ENCODE measurements at regions of chr14 and their contacts with region 1.

Region 1: GRCh38 chr14:91418387-91419043 is 895 bp upstream of the CCDC88C start:
- DNase-seq: peak; percentile 71
- H3K4me3 Mint-ChIP-seq: peak overlapping the region; percentile 71
- H3K27ac Mint-ChIP-seq: no peak overlapping the region
- H3K4me1 Mint-ChIP-seq: peaks cover 24% of the 10 kb centered on the region
- H3K27me3 Mint-ChIP-seq: no peaks in the 10 kb centered on the region
- CTCF ChIP-seq: peak; percentile 97

Region 2: DNA sequence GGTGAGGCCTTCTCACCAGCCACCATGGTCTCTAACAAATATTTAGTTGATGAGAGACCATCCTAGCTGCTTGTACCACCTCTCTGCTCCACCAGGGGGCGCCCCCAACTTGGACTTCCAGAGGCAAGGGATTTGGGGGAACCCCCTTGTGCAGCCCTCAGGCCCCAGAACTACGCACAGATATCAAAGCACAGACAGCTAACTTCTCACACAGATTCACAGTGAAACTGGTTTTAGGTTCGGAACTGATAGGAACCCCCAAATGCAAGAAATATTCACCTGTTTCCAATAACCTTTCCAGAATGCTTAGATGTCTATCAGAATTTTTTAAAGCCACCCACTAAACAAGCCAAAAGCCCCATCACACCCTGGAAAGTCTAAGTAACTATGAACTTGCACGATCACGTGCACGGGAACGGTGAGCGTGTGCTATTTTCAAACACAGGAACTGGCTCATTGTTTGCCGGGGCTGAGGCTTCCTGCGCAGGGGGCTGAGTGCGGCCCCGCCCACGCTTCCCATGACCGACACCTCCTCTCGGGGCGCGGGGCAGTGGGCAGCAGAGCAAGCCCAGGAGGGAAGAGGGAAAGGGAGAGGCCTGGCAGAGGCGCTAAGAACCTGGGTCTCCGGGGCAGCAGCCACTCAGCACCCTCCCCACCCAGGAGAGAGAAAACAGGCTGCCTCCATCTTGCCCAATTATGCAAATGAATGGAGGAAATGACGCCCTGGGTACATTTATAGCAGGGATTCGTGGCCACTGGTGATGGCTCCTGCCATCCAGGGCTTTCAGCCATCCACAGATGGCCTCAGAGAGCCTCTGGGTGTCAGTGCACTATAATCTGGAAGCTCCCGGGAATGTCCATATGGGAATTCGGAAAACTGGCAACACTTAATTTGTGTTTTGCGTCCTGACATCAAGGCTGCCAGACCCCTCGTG is 94.6 kb before region 1 on chr14:
- CTCF ChIA-PET with region 1: interaction called, 276 read pairs
- POLR2A ChIA-PET with region 1: interaction called, 22 read pairs
- intact Hi-C with region 1: no loop called
- DNase-seq: peak; percentile 81
- H3K4me3 Mint-ChIP-seq: no peak overlapping the region
- H3K27ac Mint-ChIP-seq: no peak overlapping the region
- H3K4me1 Mint-ChIP-seq: peaks cover 5% of the 10 kb centered on the region
- H3K27me3 Mint-ChIP-seq: no peaks in the 10 kb centered on the region
- CTCF ChIP-seq: peak; percentile 88

Region 3: DNA sequence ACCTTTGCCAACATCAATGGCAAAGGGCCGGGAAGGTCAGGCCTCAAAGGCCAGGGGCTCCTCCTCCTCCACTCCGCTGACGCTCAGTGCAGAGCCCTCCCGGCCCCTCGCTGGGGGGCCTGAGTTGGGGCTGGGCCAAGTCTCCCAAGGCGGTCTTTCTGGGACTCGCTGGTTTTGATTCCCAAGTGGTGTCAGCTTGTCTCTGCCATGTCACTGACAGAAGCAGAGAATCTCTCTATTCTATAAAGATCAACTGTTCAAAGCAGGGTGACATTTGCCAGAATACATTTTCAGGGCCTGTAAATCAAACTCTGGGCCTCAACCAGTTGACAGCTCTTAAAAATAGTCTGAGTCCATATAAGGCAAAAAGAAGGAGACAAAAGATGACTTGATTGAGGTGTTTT is 76.8 kb before region 1 on chr14:
- CTCF ChIA-PET with region 1: interaction called, 15 read pairs
- POLR2A ChIA-PET with region 1: interaction called, 3 read pairs
- intact Hi-C with region 1: no loop called
- DNase-seq: no peak
- H3K4me3 Mint-ChIP-seq: no peak overlapping the region
- H3K27ac Mint-ChIP-seq: no peak overlapping the region
- H3K4me1 Mint-ChIP-seq: no peaks in the 10 kb centered on the region
- H3K27me3 Mint-ChIP-seq: no peaks in the 10 kb centered on the region
- CTCF ChIP-seq: no peak

Region 4: GRCh38 chr14:91363776-91364523 is 54.6 kb before region 1 on chr14:
- CTCF ChIA-PET with region 1: interaction called, 12 read pairs
- POLR2A ChIA-PET with region 1: interaction called, 99 read pairs
- intact Hi-C with region 1: loop called (anchors 2 kb)
- DNase-seq: no peak
- H3K4me3 Mint-ChIP-seq: no peak overlapping the region
- H3K27ac Mint-ChIP-seq: no peak overlapping the region
- H3K4me1 Mint-ChIP-seq: peaks cover 39% of the 10 kb centered on the region
- H3K27me3 Mint-ChIP-seq: no peaks in the 10 kb centered on the region
- CTCF ChIP-seq: no peak

Region 5: DNA sequence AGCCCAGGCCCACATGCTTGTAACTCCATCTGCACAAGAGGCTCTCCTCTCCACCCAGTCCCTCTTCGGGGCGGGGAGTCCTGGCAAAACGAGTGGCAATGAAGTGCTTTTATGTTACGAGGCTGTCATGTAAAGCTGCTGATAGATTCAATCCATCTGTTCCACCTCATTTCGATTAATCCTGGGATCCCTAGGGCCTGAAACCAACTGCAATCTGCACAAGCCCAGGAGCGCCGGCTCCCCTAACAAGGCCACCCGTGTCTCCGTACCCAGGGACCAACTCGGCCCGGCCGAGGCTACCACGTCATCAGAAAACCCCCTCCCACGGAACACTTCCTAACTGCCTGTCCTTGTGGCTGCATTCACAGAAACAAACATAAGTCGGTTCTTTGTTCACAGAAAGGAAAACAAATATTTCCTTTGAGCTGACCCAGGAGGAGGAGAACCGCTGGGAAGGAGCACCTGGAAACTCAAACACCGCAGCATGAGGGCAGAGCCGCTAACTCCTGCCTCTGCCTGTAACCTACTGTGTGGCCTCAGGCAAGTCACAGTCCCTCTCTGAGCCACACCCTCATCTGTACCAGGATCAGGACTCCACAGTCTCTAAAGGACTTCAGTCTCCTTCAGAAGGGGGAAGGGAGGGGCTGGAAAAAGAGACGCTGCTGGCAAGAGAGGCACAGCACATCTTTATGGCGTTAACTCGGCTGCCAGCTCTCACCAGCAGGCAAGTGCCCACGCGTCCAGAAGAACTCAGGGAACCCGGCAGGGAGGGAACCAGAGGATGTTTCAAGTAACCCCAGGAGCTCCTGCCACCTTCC is 48.7 kb before region 1 on chr14:
- CTCF ChIA-PET with region 1: interaction called, 10 read pairs
- POLR2A ChIA-PET with region 1: interaction called, 16 read pairs
- intact Hi-C with region 1: no loop called
- DNase-seq: peak; percentile 74
- H3K4me3 Mint-ChIP-seq: peak overlapping the region; percentile 35
- H3K27ac Mint-ChIP-seq: peak overlapping the region; percentile 81
- H3K4me1 Mint-ChIP-seq: peaks cover 41% of the 10 kb centered on the region
- H3K27me3 Mint-ChIP-seq: no peaks in the 10 kb centered on the region
- CTCF ChIP-seq: no peak

Region 6: DNA sequence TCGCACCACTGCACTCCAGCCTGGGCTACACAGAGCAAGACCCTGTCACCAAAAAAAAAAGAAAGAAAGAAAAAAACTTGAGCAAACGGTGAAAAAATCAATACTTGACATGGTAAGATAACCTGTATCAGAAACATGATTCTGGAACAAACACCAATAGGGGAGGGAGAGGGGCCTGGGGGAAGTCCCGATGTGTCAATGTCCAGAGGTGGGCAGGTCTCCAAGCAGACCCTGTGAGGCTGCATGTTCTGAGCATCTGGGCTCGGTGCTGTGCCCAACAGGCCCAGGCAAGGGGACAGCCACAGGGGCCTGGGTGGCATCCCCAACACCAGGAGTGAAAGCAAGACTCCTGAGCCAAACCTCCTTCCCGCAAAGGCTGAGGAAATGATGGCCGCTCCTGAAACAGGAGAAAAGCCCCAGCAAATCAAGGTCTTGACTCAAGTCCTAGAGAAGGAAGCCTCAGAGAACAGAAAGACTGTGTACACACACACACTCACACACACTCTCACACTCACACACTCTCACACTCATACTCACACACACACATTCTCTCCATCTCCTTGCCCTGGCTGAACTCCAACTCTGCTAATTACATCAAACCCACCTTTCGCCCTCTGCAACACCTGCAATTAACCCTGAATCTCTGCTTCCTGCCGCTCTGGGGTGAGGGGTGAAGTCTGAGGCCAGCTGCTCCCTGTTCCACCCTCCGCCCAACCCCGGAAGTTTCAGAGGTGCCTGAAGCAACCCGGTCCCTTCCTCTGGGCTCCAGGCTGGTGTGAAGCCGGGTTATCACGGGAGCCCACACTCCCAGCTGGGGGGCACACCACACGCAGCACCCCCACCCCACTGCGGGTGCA is 21.3 kb before region 1 on chr14:
- CTCF ChIA-PET with region 1: interaction called, 9 read pairs
- POLR2A ChIA-PET with region 1: interaction called, 31 read pairs
- intact Hi-C with region 1: no loop called
- DNase-seq: peak; percentile 13
- H3K4me3 Mint-ChIP-seq: peak overlapping the region; percentile 47
- H3K27ac Mint-ChIP-seq: peak overlapping the region; percentile 99
- H3K4me1 Mint-ChIP-seq: peaks cover 36% of the 10 kb centered on the region
- H3K27me3 Mint-ChIP-seq: no peaks in the 10 kb centered on the region
- CTCF ChIP-seq: no peak

Region 7: DNA sequence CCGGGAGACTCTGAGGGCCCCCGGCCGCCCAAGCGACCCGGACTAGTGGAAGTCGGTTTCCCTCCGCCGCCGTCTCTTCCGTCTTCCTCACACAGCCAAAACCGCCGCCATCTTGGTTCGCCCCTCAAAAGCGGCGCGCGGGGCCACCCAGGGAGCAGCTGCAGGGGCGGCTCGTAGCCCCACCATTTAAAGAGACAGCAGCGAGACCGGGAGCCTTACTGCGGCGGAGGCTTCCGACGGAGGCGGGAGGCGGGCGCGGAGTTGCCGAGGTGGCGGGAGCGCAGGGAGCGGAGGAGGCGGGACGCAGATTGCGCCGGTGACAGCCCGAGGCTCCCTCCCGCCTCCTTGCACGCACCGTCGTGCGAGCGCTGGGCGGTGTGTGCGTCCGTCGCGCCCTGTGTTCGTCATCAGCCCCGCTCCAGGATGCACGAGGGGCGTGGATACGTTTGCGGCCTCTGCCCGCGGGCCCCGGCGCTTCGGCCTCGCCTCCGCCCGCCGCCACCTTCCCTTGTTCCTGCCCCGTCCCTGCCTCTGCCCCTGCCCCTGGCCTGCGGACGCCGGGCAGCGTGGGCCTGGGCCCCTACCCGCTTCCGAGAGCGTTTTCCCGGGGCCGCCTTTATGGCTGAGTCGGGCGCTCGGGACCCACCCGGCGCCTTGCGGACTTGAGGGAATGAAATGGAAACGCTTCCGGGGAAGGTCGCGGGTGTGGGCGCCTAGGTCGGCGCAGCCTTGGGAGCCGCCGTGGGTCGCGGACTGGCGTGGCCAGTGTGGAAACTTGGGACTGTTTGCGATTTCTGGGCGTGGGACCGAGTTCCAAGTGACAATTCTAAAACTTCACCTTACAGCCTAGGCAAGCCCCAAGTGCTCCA is 91.9 kb after region 1 on chr14 and contains the start of gene PPP4R3A:
- CTCF ChIA-PET with region 1: no interaction called
- POLR2A ChIA-PET with region 1: interaction called, 17 read pairs
- intact Hi-C with region 1: no loop called
- DNase-seq: peak; percentile 96
- H3K4me3 Mint-ChIP-seq: peak within 1 kb of the TSS; percentile 85
- H3K27ac Mint-ChIP-seq: peak within 1 kb of the TSS; percentile 99
- H3K4me1 Mint-ChIP-seq: no peaks in the 10 kb centered on the region
- H3K27me3 Mint-ChIP-seq: no peaks in the 10 kb centered on the region
- CTCF ChIP-seq: no peak
- total RNA-seq, gene PPP4R3A: 81.3 and 104 TPM in 2 replicates